ENCODE measurements at regions of chr2 and their contacts with region 1.

Region 1: GRCh38 chr2:84022810-84023431 is 436.2 kb downstream of the SUCLG1 start:
- DNase-seq: peak; percentile 15
- H3K4me3 ChIP-seq: no peak overlapping the region
- H3K27ac ChIP-seq: no peak overlapping the region
- H3K4me1 ChIP-seq: no peaks in the 10 kb centered on the region
- H3K27me3 ChIP-seq: no peaks in the 10 kb centered on the region
- CTCF ChIP-seq: peak; percentile 52 to 65 (median 59)
- EP300 ChIP-seq: no peak
- POLR2A ChIP-seq: no peak

Region 2: DNA sequence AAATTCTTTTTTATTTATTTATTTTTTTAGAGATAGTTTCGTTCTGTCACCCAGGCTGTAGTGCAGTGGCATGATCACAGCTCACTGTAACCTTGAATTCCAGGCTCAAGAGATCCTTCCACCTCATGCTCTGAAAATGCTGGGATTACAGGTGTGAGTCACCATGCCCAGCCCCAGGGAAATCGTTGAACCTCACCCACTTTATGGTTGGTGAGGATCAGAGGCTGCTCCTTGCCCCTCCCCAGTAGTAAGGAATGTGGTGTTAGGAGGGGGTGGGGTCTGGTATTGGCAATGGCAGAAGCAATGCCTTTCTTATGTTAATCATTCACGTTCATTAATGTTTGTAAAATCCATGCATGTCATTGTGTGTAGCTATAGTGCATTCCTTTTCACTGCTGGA is 274.2 kb after region 1 on chr2:
- in situ Hi-C with region 1: loop called in 3 of 4 experiments (anchors 10 to 25 kb)
- intact Hi-C with region 1: no loop called
- DNase-seq: peak; percentile 77
- H3K4me3 ChIP-seq: no peak overlapping the region
- H3K27ac ChIP-seq: peak overlapping the region; percentile 26 to 78 (median 60)
- H3K4me1 ChIP-seq: peaks cover 0 to 14% (median 1%) of the 10 kb centered on the region in 4 donors
- H3K27me3 ChIP-seq: no peaks in the 10 kb centered on the region
- CTCF ChIP-seq: no peak
- EP300 ChIP-seq: peak; percentile 31
- POLR2A ChIP-seq: no peak

Region 3: DNA sequence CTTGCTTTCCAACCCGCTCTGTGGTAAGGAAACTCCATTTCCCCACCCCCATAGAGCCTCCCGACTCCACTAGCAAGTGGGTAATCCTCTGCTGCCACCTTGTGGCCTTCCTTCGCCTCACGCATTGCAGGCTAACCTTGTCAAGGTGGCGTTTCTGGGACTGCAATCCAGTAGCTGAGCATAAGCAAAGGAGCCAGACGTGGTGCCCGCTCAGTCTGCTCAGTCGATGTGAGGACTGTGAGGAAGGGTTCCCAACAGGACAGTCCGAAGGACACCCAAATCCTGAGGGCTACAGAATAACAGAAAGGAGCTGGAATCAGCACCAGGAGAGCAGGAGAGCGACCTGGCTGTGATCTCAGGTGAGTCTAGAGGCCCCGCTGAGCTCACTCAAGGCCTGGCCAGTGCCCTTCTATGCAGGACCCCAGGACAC is 292.0 kb after region 1 on chr2:
- in situ Hi-C with region 1: loop called in 3 of 4 experiments (anchors 10 to 25 kb)
- intact Hi-C with region 1: no loop called
- DNase-seq: peak; percentile 89
- H3K4me3 ChIP-seq: no peak overlapping the region
- H3K27ac ChIP-seq: no peak overlapping the region
- H3K4me1 ChIP-seq: no peaks in the 10 kb centered on the region
- H3K27me3 ChIP-seq: peaks cover 4% of the 10 kb centered on the region
- CTCF ChIP-seq: peak; percentile 80 to 88 (median 82)
- EP300 ChIP-seq: no peak
- POLR2A ChIP-seq: no peak